ENCODE measurements at regions of chr11 and their contacts with region 1.

Region 1: GRCh38 chr11:119338318-119338907 is 2.3 kb downstream of the C1QTNF5 start:
- DNase-seq: peak in 34 of 35 experiments; percentile 22 to 84 (median 60)
- ATAC-seq: peak in 3 of 4 experiments; percentile 17 to 23 (median 23)
- H3K4me3 ChIP-seq: no peak overlapping the region
- H3K4me3 Mint-ChIP-seq: peak overlapping the region in 2 of 3 donors; percentile 26 to 65
- H3K27ac ChIP-seq: no peak overlapping the region
- H3K27ac Mint-ChIP-seq: no peak overlapping the region
- H3K4me1 ChIP-seq: peaks cover 14 to 58% of the 10 kb centered on the region in 2 experiments
- H3K4me1 Mint-ChIP-seq: peaks cover 38 to 50% (median 40%) of the 10 kb centered on the region in 3 donors
- H3K27me3 ChIP-seq: peaks cover 6 to 53% of the 10 kb centered on the region in 2 experiments
- H3K27me3 Mint-ChIP-seq: peaks cover 16 to 35% of the 10 kb centered on the region in 2 donors

Region 2: DNA sequence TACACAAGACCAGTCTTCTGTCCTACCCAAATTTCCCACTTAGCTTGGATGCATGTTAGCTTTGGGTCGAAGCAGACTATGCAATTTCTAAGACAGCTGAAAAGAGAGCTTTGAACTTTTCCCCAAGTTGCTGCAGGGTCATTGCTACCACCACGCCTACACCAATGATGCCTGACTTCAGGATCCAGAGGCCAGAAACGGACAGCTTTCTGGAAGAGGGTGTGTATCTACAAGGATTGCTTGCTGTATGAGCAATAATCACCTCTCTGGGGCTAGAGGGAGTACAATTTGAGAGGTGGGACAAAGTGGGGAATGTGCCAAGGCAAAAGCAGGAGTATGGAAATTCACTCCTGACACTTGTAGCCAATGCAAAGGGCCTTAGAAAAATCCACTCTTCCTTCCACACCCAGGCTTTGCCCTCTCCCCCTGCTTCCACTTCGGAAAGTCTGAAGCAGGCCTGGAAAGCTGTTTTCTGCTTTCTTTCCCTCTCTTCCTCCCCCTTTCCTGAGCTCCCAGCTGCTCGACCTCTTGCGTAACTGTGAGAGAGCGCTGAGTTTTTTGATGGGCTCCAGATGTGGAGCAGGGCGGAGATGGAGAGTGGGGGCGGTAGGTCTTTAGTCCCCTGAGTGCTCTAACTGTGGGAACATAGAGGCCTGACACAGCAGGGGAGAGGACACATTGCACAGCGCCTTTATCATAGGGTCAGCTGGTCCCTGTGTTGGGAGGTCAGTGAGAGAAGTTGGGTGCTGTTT is 733.1 kb before region 1 on chr11:
- CTCF ChIA-PET with region 1: no interaction called
- POLR2A ChIA-PET with region 1: interaction called in 1 of 2 experiments, 10 read pairs
- DNase-seq: no peak
- ATAC-seq: no peak
- H3K4me3 ChIP-seq: no peak overlapping the region
- H3K4me3 Mint-ChIP-seq: no peak overlapping the region
- H3K27ac ChIP-seq: no peak overlapping the region
- H3K27ac Mint-ChIP-seq: peak overlapping the region in 1 of 2 donors; percentile 22
- H3K4me1 ChIP-seq: peaks cover 12 to 29% of the 10 kb centered on the region in 2 experiments
- H3K4me1 Mint-ChIP-seq: peaks cover 16 to 25% (median 20%) of the 10 kb centered on the region in 3 donors
- H3K27me3 ChIP-seq: peaks cover 0 to 18% of the 10 kb centered on the region in 2 experiments
- H3K27me3 Mint-ChIP-seq: peaks cover 0 to 10% of the 10 kb centered on the region in 2 donors

Region 3: DNA sequence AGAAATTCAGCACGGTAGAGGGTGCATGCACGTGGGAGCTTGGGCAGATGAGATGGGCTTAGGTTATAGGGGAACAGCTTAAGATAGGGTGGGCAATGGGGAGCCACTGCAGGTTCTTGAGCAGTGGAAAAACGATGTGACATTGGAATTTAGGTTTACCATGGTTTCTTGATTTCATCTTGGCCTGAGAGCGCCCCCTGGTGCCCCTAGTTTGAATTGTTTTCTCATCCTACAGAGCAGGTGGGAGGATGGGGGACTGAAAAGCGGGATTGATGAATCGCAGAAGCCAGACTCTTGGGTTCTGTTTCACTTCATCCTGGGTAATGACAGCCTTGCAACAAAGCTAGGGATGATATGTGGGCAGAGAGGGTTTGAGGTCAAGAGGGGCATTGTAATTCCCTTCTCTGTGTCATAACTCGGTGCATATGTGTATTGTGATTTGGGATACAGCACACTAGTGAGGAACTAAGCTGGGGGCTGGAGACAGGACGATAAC is 14.8 kb before region 1 on chr11:
- CTCF ChIA-PET with region 1: interaction called, 4 to 10 read pairs
- POLR2A ChIA-PET with region 1: interaction called in 1 of 2 experiments, 14 read pairs
- DNase-seq: peak; percentile 44 to 85 (median 75)
- ATAC-seq: peak in 2 of 4 experiments; percentile 8 to 23
- H3K4me3 ChIP-seq: no peak overlapping the region
- H3K4me3 Mint-ChIP-seq: peak overlapping the region in 1 of 3 donors; percentile 31
- H3K27ac ChIP-seq: no peak overlapping the region
- H3K27ac Mint-ChIP-seq: no peak overlapping the region
- H3K4me1 ChIP-seq: peaks cover 2 to 35% of the 10 kb centered on the region in 2 experiments
- H3K4me1 Mint-ChIP-seq: peaks cover 20 to 27% (median 20%) of the 10 kb centered on the region in 3 donors
- H3K27me3 ChIP-seq: peaks cover 0 to 20% of the 10 kb centered on the region in 2 experiments
- H3K27me3 Mint-ChIP-seq: peaks cover 3 to 5% of the 10 kb centered on the region in 2 donors

Region 4: DNA sequence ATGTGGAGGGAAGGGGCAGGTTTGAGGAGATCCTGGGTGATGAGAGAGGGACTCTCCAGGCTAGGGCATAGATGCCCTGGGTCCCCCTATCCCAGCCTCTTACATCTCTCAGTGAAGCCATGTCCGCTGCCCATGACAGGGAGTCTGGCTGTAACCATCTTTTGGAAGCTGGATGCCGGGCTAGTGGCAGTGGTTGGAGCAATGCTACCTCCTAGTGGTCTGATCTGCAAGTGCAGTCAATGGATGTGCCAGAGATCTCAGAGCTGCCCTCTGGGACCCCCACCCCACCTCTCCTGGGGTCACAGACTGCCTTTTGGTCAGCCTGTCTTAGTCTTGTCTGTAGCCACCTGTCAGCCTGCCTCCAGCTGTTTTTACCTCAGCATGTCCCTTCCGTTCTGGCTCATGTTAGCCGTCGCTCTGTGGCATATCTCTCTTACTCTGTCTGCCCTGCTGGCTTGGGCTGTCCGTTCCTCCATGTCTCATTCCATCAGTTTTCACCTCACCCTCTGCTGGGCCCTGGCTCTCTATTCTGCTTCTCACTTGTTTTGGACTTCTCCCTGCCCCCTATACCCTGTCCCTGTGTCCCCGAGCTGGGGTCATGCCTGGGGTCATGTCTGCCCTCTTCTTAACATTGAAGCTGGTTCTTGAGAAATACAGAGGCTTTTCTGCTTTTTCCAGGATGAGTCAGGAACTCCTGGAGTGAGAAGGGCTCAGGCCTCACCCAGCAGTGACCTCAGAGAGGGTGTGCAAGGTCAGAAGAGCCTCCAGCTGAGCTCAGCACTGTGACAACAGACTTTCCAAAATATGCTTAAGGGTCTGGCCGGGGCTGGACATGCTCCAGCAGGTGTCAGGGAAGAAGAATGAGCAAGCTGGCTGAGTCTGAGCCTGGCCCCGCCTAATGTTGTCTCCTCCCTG is 136.5 kb after region 1 on chr11:
- CTCF ChIA-PET with region 1: interaction called in 1 of 2 experiments, 11 read pairs
- POLR2A ChIA-PET with region 1: no interaction called
- DNase-seq: peak in 27 of 35 experiments; percentile 13 to 72 (median 32)
- ATAC-seq: peak; percentile 36 to 48 (median 38)
- H3K4me3 ChIP-seq: no peak overlapping the region
- H3K4me3 Mint-ChIP-seq: no peak overlapping the region
- H3K27ac ChIP-seq: no peak overlapping the region
- H3K27ac Mint-ChIP-seq: no peak overlapping the region
- H3K4me1 ChIP-seq: no peaks in the 10 kb centered on the region
- H3K4me1 Mint-ChIP-seq: no peaks in the 10 kb centered on the region
- H3K27me3 ChIP-seq: peaks cover 0 to 53% of the 10 kb centered on the region in 2 experiments
- H3K27me3 Mint-ChIP-seq: peaks cover 34 to 49% of the 10 kb centered on the region in 2 donors

Measured in T-cell (primary cell).